Activated naive CD4-positive, alpha-beta T cell treated with anti-CD3 and anti-CD28 coated beads for 36 hours (primary cell): ENCODE measurements at regions of chr13 and their contacts with region 1.

Region 1: GRCh38 chr13:74287724-74288169 is 153.5 kb upstream of the KLF12 start:
- DNase-seq: peak; percentile 88
- H3K4me3 Mint-ChIP-seq: peak overlapping the region; percentile 73
- H3K27ac Mint-ChIP-seq: peak overlapping the region; percentile 61
- H3K4me1 Mint-ChIP-seq: peaks cover 66% of the 10 kb centered on the region
- H3K27me3 Mint-ChIP-seq: no peaks in the 10 kb centered on the region

Region 2: GRCh38 chr13:73722120-73722519 is 565.6 kb before region 1 on chr13:
- CTCF ChIA-PET with region 1: interaction called, 7 read pairs
- intact Hi-C with region 1: loop called (anchors 1 kb)
- DNase-seq: peak; percentile 35
- H3K4me3 Mint-ChIP-seq: no peak overlapping the region
- H3K27ac Mint-ChIP-seq: no peak overlapping the region
- H3K4me1 Mint-ChIP-seq: peaks cover 38% of the 10 kb centered on the region
- H3K27me3 Mint-ChIP-seq: no peaks in the 10 kb centered on the region

Region 3: GRCh38 chr13:73835138-73835721 is 452.5 kb before region 1 on chr13:
- CTCF ChIA-PET with region 1: interaction called, 6 read pairs
- intact Hi-C with region 1: loop called (anchors 1 kb)
- DNase-seq: no peak
- H3K4me3 Mint-ChIP-seq: no peak overlapping the region
- H3K27ac Mint-ChIP-seq: no peak overlapping the region
- H3K4me1 Mint-ChIP-seq: peaks cover 47% of the 10 kb centered on the region
- H3K27me3 Mint-ChIP-seq: no peaks in the 10 kb centered on the region

Region 4: DNA sequence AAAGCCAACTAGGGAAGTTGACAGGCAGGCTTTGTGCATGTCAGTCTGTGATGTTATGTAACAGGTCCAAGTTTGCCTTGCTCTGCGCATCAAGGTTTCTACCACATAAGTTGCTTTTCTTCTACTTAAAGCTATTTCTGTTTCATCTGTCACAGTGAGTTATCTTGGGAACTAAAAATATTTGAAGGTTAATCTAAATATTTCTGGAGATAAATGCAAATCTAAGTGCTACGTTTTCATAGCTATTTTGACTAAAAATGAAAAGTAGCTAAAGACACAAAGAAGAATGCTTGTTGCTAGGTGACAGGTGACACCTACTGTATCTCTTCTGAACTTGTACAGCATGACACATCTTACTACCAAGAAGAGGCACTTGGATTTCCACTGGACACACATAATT is 289.1 kb before region 1 on chr13:
- CTCF ChIA-PET with region 1: no interaction called
- intact Hi-C with region 1: loop called (anchors 1 kb)
- DNase-seq: no peak
- H3K4me3 Mint-ChIP-seq: no peak overlapping the region
- H3K27ac Mint-ChIP-seq: no peak overlapping the region
- H3K4me1 Mint-ChIP-seq: peaks cover 52% of the 10 kb centered on the region
- H3K27me3 Mint-ChIP-seq: no peaks in the 10 kb centered on the region

Region 5: GRCh38 chr13:74191410-74191809 is 96.3 kb before region 1 on chr13:
- CTCF ChIA-PET with region 1: interaction called, 17 read pairs
- intact Hi-C with region 1: loop called (anchors 1 kb)
- DNase-seq: no peak
- H3K4me3 Mint-ChIP-seq: no peak overlapping the region
- H3K27ac Mint-ChIP-seq: peak overlapping the region; percentile 50
- H3K4me1 Mint-ChIP-seq: peaks cover 38% of the 10 kb centered on the region
- H3K27me3 Mint-ChIP-seq: no peaks in the 10 kb centered on the region

Region 6: DNA sequence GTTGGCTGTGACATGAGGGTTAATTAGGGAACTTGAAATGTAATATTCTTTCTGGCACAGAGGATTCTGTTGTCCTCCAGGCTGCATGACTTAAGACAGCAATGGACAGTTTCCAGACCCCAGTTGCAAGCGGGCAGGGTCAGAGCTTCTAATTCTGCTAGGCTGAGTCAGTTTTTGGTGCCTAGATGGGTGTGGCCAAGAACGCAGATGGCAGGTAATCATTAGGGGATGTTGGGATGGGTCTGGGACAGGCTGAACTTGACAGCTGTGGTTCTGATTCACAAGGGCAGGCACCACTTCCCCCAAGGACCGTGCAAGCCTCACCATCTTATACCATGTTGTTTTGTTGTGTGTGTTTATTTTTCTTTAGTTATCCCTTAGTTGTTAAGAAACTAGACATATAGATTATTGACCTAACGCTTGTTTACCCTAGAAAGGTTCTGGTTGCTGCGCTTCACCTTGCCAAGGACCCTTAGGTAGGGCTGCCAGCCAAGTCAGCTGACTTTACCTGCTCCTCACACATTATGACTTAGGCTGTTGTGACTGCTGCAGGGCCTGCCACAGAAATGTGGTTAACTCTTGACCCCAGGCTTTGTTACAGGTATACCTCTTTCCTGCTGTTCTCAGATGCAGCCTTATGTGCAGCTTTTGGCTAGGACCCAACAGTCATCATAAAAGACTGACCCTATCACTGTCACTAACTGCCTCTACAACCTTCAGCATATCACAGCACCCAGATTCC is 35.8 kb before region 1 on chr13:
- CTCF ChIA-PET with region 1: interaction called, 11 read pairs
- intact Hi-C with region 1: no loop called
- DNase-seq: no peak
- H3K4me3 Mint-ChIP-seq: no peak overlapping the region
- H3K27ac Mint-ChIP-seq: no peak overlapping the region
- H3K4me1 Mint-ChIP-seq: peaks cover 79% of the 10 kb centered on the region
- H3K27me3 Mint-ChIP-seq: no peaks in the 10 kb centered on the region